ENCODE measurements at regions of chr20 and their contacts with region 1.

Region 1: DNA sequence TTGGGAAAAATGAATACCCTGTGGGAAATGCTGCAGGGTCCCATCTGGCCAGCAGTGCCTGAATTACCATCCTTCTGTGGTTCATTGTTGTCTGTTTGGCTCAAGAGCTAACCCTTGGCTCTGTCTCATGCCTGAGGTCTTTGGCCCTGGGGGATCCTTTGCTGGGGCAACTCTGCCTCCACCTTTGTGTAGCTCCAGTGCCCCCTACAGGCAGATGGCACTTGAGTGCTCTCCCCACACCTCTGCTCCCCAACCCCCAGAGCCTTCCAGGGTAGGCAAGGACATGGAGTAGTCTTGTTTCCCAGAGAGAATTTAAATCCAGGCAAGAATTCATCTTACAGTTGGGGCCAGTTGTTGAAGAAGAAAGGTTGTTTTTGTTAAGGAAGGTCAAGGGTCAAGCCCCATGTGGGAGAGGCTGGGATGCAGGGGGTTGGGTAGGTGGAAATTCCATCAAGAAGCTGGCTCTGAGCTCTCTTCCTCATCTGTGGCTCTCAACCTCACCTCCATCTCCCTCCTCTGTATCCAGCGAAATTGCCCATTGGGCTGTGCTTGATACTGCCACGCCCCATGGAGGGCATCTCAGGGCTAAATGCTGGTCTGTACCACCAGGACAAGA is 44.2 kb downstream of the ZNF831 start:
- DNase-seq: peak; percentile 86
- ATAC-seq: peak; percentile 96
- H3K4me3 Mint-ChIP-seq: no peak overlapping the region
- H3K27ac Mint-ChIP-seq: peak overlapping the region; percentile 49
- H3K4me1 Mint-ChIP-seq: peaks cover 4% of the 10 kb centered on the region
- H3K27me3 Mint-ChIP-seq: no peaks in the 10 kb centered on the region

Region 2: DNA sequence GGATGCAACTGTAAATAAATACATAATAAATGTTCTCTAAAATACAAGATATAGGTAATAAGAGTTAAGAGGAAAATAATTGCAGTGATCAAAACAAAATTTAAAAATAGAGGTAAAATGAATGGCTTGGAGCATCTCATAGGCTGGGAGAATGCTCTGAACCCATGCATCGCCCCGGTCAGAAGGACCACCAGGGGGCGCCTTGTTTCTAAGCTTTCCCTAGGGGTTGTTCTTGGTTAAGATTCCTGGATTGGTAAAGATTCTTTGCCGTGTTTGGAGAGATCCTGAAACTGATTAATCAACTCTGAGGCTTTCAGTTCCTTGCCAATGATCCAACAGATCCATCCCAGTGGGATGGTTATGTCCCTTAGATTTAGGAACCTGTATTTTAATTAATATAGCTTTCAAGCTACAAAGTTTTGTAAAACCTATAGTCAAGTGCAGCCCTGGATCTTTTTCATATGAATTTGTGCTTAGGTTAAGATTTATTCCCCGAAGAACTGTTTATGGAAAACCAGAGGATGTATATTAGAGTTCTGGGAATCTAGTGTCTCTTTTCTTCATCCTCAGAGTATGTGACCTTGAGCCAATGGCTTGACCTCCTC is 119.9 kb before region 1 on chr20:
- CTCF ChIA-PET with region 1: interaction called, 195 read pairs
- DNase-seq: peak; percentile 87
- ATAC-seq: peak; percentile 84
- H3K4me3 Mint-ChIP-seq: no peak overlapping the region
- H3K27ac Mint-ChIP-seq: no peak overlapping the region
- H3K4me1 Mint-ChIP-seq: peaks cover 2% of the 10 kb centered on the region
- H3K27me3 Mint-ChIP-seq: peaks cover 18% of the 10 kb centered on the region

Region 3: GRCh38 chr20:59102841-59103299 is 105.0 kb before region 1 on chr20:
- CTCF ChIA-PET with region 1: interaction called, 11 read pairs
- DNase-seq: no peak
- ATAC-seq: no peak
- H3K4me3 Mint-ChIP-seq: no peak overlapping the region
- H3K27ac Mint-ChIP-seq: no peak overlapping the region
- H3K4me1 Mint-ChIP-seq: peaks cover 10% of the 10 kb centered on the region
- H3K27me3 Mint-ChIP-seq: peaks cover 12% of the 10 kb centered on the region

Region 4: GRCh38 chr20:59149651-59150504 is 58.0 kb before region 1 on chr20:
- CTCF ChIA-PET with region 1: interaction called, 15 read pairs
- DNase-seq: peak; percentile 90
- ATAC-seq: peak; percentile 80
- H3K4me3 Mint-ChIP-seq: peak overlapping the region; percentile 21
- H3K27ac Mint-ChIP-seq: peak overlapping the region; percentile 81
- H3K4me1 Mint-ChIP-seq: peaks cover 77% of the 10 kb centered on the region
- H3K27me3 Mint-ChIP-seq: peaks cover 10% of the 10 kb centered on the region

Region 5: DNA sequence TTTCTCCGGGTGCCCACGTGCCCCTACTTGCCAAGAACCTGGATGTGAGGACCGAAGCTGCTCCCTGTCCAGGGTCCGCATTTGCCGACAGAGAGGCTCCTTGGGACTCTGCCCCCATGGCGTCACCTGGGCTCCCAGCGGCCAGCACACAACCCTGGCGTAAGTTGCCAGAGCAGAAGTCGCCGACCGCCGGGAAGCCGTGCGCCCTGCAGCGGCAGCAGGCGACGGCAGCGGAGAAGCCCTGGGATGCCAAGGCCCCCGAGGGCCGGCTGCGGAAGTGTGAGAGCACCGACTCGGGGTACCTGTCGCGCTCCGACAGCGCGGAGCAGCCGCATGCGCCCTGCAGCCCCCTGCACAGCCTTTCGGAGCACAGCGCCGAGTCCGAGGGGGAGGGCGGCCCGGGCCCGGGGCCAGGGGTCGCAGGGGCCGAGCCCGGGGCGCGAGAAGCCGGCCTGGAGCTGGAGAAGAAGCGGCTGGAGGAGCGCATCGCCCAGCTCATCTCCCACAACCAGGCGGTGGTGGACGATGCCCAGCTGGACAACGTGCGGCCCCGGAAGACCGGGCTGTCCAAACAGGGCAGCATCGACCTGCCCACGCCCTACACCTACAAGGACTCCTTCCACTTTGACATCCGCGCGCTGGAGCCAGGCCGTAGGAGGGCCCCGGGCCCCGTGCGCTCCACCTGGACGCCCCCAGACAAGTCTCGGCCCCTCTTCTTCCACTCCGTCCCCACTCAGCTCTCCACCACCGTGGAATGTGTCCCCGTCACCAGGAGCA is 15.9 kb before region 1 on chr20:
- CTCF ChIA-PET with region 1: interaction called, 12 read pairs
- DNase-seq: peak; percentile 30
- ATAC-seq: no peak
- H3K4me3 Mint-ChIP-seq: no peak overlapping the region
- H3K27ac Mint-ChIP-seq: no peak overlapping the region
- H3K4me1 Mint-ChIP-seq: no peaks in the 10 kb centered on the region
- H3K27me3 Mint-ChIP-seq: no peaks in the 10 kb centered on the region